ENCODE measurements at regions of chr1 and their contacts with region 1.

Region 1: GRCh38 chr1:54335755-54336108 is 70.5 kb downstream of the SSBP3 start:
- DNase-seq: peak; percentile 81
- ATAC-seq: peak; percentile 91

Region 2: GRCh38 chr1:54290506-54291184 is 45.1 kb before region 1 on chr1:
- intact Hi-C with region 1: loop called (anchors 1 kb)
- DNase-seq: no peak
- ATAC-seq: no peak

Region 3: GRCh38 chr1:54384911-54385726 is 49.4 kb after region 1 on chr1:
- intact Hi-C with region 1: loop called (anchors 10 kb)
- DNase-seq: no peak
- ATAC-seq: peak; percentile 14

Measured in sciatic nerve (tissue), 2 donors.